Naive thymus-derived CD8-positive, alpha-beta T cell (primary cell): ENCODE measurements at regions of chr1 and their contacts with region 1.

Region 1: DNA sequence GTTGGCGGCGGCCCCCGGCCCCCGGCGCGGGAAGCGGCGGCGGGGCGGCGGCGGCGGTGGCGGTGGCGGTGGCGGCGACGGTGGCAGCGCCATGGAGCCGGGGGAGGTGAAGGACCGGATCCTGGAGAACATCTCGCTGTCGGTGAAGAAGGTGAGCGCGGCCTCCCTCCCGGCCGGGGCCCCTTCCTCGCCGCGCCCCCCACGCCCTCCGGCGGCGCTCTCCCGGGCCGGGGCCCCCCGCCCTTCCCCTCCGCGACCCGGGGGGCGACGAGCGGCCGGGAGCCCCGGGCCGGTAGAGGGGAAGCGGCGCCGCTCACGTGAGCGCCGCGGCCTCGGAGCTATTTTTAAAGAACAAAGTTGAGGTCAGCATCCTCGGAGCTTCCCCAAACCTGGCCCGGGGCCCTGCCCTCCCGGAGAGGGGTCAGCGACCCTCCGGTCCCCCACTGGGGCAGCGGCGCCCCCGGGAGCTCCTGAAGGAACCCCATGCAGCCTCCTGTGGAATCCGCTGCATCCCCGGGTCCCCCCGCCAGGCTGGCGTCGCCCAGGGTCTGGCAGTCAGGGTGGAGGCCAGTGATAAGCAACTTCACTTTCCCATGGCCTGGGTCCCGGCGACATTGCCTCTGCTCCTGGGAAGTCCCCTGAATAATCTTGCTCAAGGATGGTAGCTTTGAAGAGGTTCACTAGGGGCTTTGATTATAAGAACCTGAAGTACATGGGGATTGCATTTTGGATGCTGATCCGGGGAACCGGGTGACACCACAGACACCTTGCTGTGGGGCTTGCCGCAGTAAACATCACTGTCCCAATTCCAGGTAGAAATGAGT is 560 bp downstream of the PLEKHM2 start:
- DNase-seq: peak in 9 of 10 donors; percentile 17 to 41 (median 28)
- ATAC-seq: peak; percentile 61 to 63
- H3K4me3 Mint-ChIP-seq: peak overlapping the region; percentile 63 to 94 (median 90)
- H3K27ac Mint-ChIP-seq: peak overlapping the region; percentile 82 to 96 (median 94)
- H3K4me1 Mint-ChIP-seq: peaks cover 13 to 61% (median 35%) of the 10 kb centered on the region in 4 donors
- H3K27me3 Mint-ChIP-seq: no peaks in the 10 kb centered on the region

Region 2: GRCh38 chr1:15696956-15697521 is 12.4 kb after region 1 on chr1:
- POLR2A ChIA-PET with region 1: interaction called, 20 read pairs
- DNase-seq: peak in 8 of 10 donors; percentile 20 to 68 (median 40)
- ATAC-seq: peak; percentile 89 to 92
- H3K4me3 Mint-ChIP-seq: peak overlapping the region; percentile 80 to 97 (median 88)
- H3K27ac Mint-ChIP-seq: peak overlapping the region; percentile 85 to 99 (median 97)
- H3K4me1 Mint-ChIP-seq: peaks cover 20 to 66% (median 39%) of the 10 kb centered on the region in 4 donors
- H3K27me3 Mint-ChIP-seq: no peaks in the 10 kb centered on the region